B cell (primary cell): ENCODE measurements at regions of chr16 and their contacts with region 1.

Region 1: GRCh38 chr16:21523411-21524067 is 75.8 kb upstream of the METTL9 start:
- DNase-seq: no peak
- ATAC-seq: no peak
- H3K4me3 ChIP-seq: no peak overlapping the region
- H3K4me3 Mint-ChIP-seq: no peak overlapping the region
- H3K27ac ChIP-seq: no peak overlapping the region
- H3K27ac Mint-ChIP-seq: peak overlapping the region; percentile 26
- H3K4me1 ChIP-seq: peaks cover 3 to 7% of the 10 kb centered on the region in 2 donors
- H3K4me1 Mint-ChIP-seq: peaks cover 6% of the 10 kb centered on the region
- H3K27me3 ChIP-seq: peaks cover 0 to 3% (median 0%) of the 10 kb centered on the region in 4 experiments
- H3K27me3 Mint-ChIP-seq: peaks cover 3% of the 10 kb centered on the region
- CTCF ChIP-seq: no peak

Region 2: GRCh38 chr16:20383106-20384029 is 1140.2 kb before region 1 on chr16:
- CTCF ChIA-PET with region 1: no interaction called
- POLR2A ChIA-PET with region 1: no interaction called
- intact Hi-C with region 1: no loop called
- DNase-seq: peak; percentile 54
- ATAC-seq: no peak
- H3K4me3 ChIP-seq: no peak overlapping the region
- H3K4me3 Mint-ChIP-seq: no peak overlapping the region
- H3K27ac ChIP-seq: no peak overlapping the region
- H3K27ac Mint-ChIP-seq: no peak overlapping the region
- H3K4me1 ChIP-seq: no peaks in the 10 kb centered on the region
- H3K4me1 Mint-ChIP-seq: peaks cover 2% of the 10 kb centered on the region
- H3K27me3 ChIP-seq: peaks cover 0 to 21% (median 1%) of the 10 kb centered on the region in 4 experiments
- H3K27me3 Mint-ChIP-seq: peaks cover 25% of the 10 kb centered on the region
- CTCF ChIP-seq: peak; percentile 79

Region 3: GRCh38 chr16:21501909-21502667 is 21.5 kb before region 1 on chr16:
- CTCF ChIA-PET with region 1: no interaction called
- POLR2A ChIA-PET with region 1: interaction called, 10 read pairs
- intact Hi-C with region 1: no loop called
- DNase-seq: peak; percentile 97
- ATAC-seq: peak; percentile 76
- H3K4me3 ChIP-seq: peak overlapping the region in 4 of 5 experiments; percentile 84 to 88 (median 87)
- H3K4me3 Mint-ChIP-seq: peak overlapping the region; percentile 90
- H3K27ac ChIP-seq: peak overlapping the region; percentile 92 to 96
- H3K27ac Mint-ChIP-seq: peak overlapping the region; percentile 94
- H3K4me1 ChIP-seq: peaks cover 21 to 33% of the 10 kb centered on the region in 2 donors
- H3K4me1 Mint-ChIP-seq: peaks cover 23% of the 10 kb centered on the region
- H3K27me3 ChIP-seq: no peaks in the 10 kb centered on the region
- H3K27me3 Mint-ChIP-seq: no peaks in the 10 kb centered on the region
- CTCF ChIP-seq: no peak